ENCODE measurements at regions of chr7 and their contacts with region 1.

Region 1: DNA sequence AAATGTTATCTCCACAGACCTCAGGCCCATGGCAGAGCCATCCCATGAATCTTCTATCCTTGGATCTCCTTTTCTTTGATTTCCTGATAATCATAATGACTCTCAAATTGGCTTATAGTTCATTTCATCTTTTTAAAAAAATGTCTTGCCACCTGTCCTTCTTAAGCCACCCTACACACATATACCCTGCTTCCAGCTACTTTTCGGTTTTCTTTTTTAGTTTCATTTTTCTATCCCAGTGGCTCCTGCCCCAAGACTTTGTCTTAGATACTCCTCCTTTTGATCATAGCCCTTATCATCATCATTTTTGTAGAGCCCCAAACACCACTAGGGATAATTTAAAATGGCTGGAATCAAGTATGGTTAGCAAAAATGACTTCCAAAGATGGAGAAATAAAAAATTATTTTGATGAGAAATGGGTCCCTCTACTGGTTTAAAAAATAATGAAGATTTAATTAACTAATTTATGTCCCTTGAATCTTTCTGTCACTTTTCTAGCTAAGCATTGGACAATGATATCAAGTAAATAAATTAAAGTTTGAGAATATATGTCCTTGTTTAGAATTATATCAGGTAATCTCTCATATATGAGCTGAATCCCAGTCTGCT is 277.3 kb upstream of the SEMA3D start:
- DNase-seq: peak; percentile 47
- H3K4me3 ChIP-seq: no peak overlapping the region
- H3K27ac ChIP-seq: no peak overlapping the region
- H3K4me1 ChIP-seq: no peaks in the 10 kb centered on the region
- H3K27me3 ChIP-seq: no peaks in the 10 kb centered on the region
- CTCF ChIP-seq: peak; percentile 47

Region 2: GRCh38 chr7:85023045-85023712 is 441.0 kb before region 1 on chr7:
- CTCF ChIA-PET with region 1: no interaction called
- POLR2A ChIA-PET with region 1: no interaction called
- intact Hi-C with region 1: no loop called
- DNase-seq: peak; percentile 76
- H3K4me3 ChIP-seq: no peak overlapping the region
- H3K27ac ChIP-seq: no peak overlapping the region
- H3K4me1 ChIP-seq: no peaks in the 10 kb centered on the region
- H3K27me3 ChIP-seq: no peaks in the 10 kb centered on the region
- CTCF ChIP-seq: peak; percentile 70

Region 3: GRCh38 chr7:85041605-85042216 is 422.4 kb before region 1 on chr7:
- CTCF ChIA-PET with region 1: interaction called, 3 read pairs
- POLR2A ChIA-PET with region 1: no interaction called
- intact Hi-C with region 1: loop called (anchors 2 kb)
- DNase-seq: peak; percentile 80
- H3K4me3 ChIP-seq: no peak overlapping the region
- H3K27ac ChIP-seq: no peak overlapping the region
- H3K4me1 ChIP-seq: peaks cover 8% of the 10 kb centered on the region
- H3K27me3 ChIP-seq: no peaks in the 10 kb centered on the region
- CTCF ChIP-seq: peak; percentile 87

Region 4: DNA sequence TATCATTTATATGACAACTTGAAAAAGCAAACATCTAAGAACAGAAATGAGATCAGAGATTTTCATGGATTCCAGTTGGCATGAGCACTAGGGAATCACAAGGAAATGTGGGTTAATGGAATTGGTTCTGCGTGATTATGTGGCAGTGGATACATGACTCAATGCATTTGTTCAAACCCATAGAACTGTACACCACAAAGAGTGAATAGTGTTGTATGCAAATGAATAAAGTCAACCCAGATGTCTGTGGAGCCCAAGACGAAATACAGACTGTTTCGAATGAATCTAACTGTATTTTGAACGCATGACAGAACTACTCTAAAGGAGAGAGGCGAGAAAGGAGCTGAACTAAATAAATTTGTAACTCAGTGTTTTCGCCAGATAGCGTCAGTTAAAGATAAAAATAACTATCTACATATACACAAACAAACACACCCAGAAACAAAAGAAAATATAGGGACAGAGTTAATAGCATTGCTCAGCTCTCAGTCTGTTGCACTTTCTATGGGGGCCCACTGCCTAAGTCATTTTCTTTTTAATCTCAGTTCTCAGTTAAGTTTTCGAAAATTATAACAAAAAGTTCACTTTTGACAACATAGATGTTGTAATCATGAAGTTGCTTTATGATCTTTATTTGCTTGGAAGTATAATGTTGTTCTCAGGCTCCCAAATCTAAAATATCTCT is 359.4 kb after region 1 on chr7:
- CTCF ChIA-PET with region 1: no interaction called
- POLR2A ChIA-PET with region 1: no interaction called
- intact Hi-C with region 1: loop called (anchors 5 kb)
- DNase-seq: no peak
- H3K4me3 ChIP-seq: no peak overlapping the region
- H3K27ac ChIP-seq: no peak overlapping the region
- H3K4me1 ChIP-seq: no peaks in the 10 kb centered on the region
- H3K27me3 ChIP-seq: no peaks in the 10 kb centered on the region
- CTCF ChIP-seq: no peak

Measured in A673 (cell line).